WTC11 (cell line): ENCODE measurements at regions of chr12 and their contacts with region 1.

Region 1: DNA sequence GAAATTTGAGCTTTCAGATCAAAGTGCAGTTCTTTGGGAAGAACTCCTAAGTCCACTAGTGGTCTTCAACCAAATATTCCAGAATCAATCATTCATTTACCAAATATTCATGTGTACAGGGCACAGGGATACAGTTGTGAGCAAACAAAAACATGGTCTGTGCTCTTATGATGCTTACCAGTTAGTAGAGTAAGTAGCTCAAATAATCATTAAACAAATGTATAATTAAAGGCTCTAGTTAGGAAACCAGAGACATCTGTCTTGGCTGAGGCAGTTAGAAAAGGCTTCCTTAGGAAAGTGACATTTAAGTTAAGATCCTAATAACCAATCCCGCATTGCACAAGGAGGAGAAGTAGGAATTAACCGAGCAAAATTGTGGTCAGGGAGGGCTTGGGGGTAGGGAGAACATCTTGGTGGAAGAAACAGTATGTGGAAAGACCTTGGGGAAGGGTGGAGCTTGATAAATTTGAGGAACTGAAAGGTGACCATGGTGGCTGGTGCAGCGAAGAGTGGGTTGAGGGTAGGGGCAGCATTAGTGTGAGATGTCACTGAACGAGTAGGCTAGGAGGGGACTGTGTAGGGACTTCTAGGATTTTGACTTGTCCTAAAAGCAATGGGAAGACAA is 40.0 kb downstream of the PEBP1 start:
- DNase-seq: no peak
- ATAC-seq: no peak
- H3K4me3 Mint-ChIP-seq: no peak overlapping the region
- H3K27ac Mint-ChIP-seq: no peak overlapping the region
- H3K4me1 Mint-ChIP-seq: peaks cover 7% of the 10 kb centered on the region; the same call in 1 of the 2 replicates
- H3K27me3 Mint-ChIP-seq: no peaks in the 10 kb centered on the region
- CTCF ChIP-seq: no peak

Region 2: DNA sequence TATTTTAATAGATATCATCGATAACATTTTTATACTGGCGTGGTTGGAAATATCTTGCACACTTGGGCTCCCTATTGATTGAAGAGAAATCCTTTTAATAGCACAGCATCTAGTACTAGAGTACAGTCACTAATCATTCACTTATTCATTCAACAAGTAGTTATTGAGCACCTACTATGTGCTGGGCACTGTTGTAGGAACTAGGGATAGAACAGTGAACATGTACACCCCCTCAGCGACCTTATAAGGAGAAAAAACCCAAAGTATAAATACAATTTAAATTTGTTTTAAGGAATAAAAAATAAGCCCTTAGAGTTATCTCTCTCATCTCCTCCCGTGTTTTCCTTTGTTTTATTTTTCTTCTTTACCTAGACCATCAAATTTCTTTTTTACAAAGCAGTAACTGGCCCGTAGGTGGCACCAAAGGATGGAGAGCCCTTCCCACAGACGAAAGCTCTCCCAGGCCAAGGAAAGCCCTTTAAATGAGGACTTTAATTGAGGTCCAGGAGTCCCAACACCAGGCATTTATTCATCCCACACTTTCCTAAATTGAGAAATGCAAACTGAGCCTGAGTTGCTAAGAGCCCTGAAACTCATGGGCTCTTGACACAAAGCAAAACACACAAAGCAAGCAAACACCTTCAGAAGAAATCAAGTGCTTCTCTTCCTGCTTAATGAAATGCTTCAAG is 11.0 kb before region 1 on chr12:
- CTCF ChIA-PET with region 1: interaction called, 18 read pairs
- POLR2A ChIA-PET with region 1: no interaction called
- DNase-seq: peak; percentile 59
- ATAC-seq: peak; percentile 81
- H3K4me3 Mint-ChIP-seq: no peak overlapping the region
- H3K27ac Mint-ChIP-seq: peak overlapping the region; percentile 67; the same call in 1 of the 2 replicates
- H3K4me1 Mint-ChIP-seq: peaks cover 4% of the 10 kb centered on the region; the same call in 1 of the 2 replicates
- H3K27me3 Mint-ChIP-seq: no peaks in the 10 kb centered on the region
- CTCF ChIP-seq: peak; percentile 36

Region 3: DNA sequence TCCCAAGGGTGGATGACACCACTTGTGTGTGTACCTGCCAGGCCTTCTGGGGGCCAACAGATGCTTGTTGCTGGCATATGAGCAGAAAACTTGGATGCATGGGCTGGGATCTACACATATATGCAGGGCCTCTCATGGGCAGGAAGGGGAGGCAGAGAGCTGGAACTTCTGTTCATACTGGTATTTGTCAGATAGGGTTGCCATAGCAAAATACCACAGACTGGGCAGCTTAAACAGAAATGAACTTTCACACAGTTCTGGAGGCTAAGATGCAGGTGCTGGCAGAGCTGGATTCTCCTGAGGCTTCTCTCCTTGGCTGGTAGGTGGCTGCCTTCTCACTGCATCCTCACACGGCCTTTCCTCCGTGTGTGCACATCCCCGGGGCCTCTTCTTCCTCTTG is 322.2 kb after region 1 on chr12:
- CTCF ChIA-PET with region 1: no interaction called
- POLR2A ChIA-PET with region 1: no interaction called
- DNase-seq: no peak
- ATAC-seq: no peak
- H3K4me3 Mint-ChIP-seq: no peak overlapping the region
- H3K27ac Mint-ChIP-seq: no peak overlapping the region
- H3K4me1 Mint-ChIP-seq: peaks cover 12% of the 10 kb centered on the region
- H3K27me3 Mint-ChIP-seq: no peaks in the 10 kb centered on the region
- CTCF ChIP-seq: no peak